ENCODE measurements at regions of chr1 and their contacts with region 1.

Region 1: GRCh38 chr1:99808391-99809115 is 41.6 kb upstream of the AGL start:
- DNase-seq: no peak
- H3K4me3 ChIP-seq: peak overlapping the region in 1 of 2 donors; percentile 6
- H3K27ac ChIP-seq: peak overlapping the region; percentile 71
- H3K4me1 ChIP-seq: peaks cover 0 to 4% (median 2%) of the 10 kb centered on the region in 4 donors
- H3K27me3 ChIP-seq: no peaks in the 10 kb centered on the region
- CTCF ChIP-seq: peak; percentile 59 to 74

Region 2: GRCh38 chr1:100061681-100062080 is 253.1 kb after region 1 on chr1:
- intact Hi-C with region 1: no loop called
- DNase-seq: no peak
- H3K4me3 ChIP-seq: no peak overlapping the region
- H3K27ac ChIP-seq: no peak overlapping the region
- H3K4me1 ChIP-seq: peaks cover 0 to 5% (median 0%) of the 10 kb centered on the region in 4 donors
- H3K27me3 ChIP-seq: no peaks in the 10 kb centered on the region
- CTCF ChIP-seq: no peak

Region 3: GRCh38 chr1:100459358-100460114 is 651.0 kb after region 1 on chr1:
- intact Hi-C with region 1: loop called (anchors 10 kb)
- DNase-seq: peak; percentile 75 to 80
- H3K4me3 ChIP-seq: no peak overlapping the region
- H3K27ac ChIP-seq: no peak overlapping the region
- H3K4me1 ChIP-seq: peaks cover 0 to 5% (median 2%) of the 10 kb centered on the region in 4 donors
- H3K27me3 ChIP-seq: no peaks in the 10 kb centered on the region
- CTCF ChIP-seq: peak; percentile 79 to 83

Measured in tibial artery (tissue), 4 donors.